Endothelial cell of umbilical vein (primary cell): ENCODE measurements at regions of chr3 and their contacts with region 1.

Region 1: GRCh38 chr3:88113311-88114162 is 36.2 kb upstream of the C3orf38 start:
- DNase-seq: peak; percentile 84
- H3K4me3 ChIP-seq: no peak overlapping the region
- H3K27ac ChIP-seq: peak overlapping the region; percentile 3
- H3K4me1 ChIP-seq: no peaks in the 10 kb centered on the region
- H3K27me3 ChIP-seq: no peaks in the 10 kb centered on the region
- CTCF ChIP-seq: peak; percentile 59 to 62
- POLR2A ChIP-seq: no peak

Region 2: DNA sequence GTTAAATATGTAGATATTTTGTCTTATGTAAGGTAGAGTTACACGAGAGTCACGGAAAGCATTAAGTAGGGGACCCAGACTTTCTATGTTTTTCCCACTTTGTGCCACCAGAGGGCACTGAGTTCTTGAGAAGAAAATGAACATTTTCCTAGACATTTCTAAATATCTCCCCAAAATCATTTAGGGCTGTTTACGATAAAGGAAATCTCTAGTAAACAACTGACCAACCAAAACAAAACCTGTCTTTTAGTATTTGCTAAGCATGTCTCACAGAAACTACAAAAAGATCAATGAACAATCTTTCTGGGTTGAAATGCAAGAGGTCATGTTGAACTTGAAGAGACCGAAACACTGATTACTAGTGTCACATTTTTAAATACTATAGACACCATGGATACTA is 853.3 kb before region 1 on chr3:
- CTCF ChIA-PET with region 1: interaction called, 12 read pairs
- POLR2A ChIA-PET with region 1: no interaction called
- dilution Hi-C with region 1: no loop called
- intact Hi-C with region 1: no loop called
- DNase-seq: peak; percentile 66
- H3K4me3 ChIP-seq: no peak overlapping the region
- H3K27ac ChIP-seq: no peak overlapping the region
- H3K4me1 ChIP-seq: no peaks in the 10 kb centered on the region
- H3K27me3 ChIP-seq: no peaks in the 10 kb centered on the region
- CTCF ChIP-seq: peak; percentile 53 to 59
- POLR2A ChIP-seq: no peak

Region 3: DNA sequence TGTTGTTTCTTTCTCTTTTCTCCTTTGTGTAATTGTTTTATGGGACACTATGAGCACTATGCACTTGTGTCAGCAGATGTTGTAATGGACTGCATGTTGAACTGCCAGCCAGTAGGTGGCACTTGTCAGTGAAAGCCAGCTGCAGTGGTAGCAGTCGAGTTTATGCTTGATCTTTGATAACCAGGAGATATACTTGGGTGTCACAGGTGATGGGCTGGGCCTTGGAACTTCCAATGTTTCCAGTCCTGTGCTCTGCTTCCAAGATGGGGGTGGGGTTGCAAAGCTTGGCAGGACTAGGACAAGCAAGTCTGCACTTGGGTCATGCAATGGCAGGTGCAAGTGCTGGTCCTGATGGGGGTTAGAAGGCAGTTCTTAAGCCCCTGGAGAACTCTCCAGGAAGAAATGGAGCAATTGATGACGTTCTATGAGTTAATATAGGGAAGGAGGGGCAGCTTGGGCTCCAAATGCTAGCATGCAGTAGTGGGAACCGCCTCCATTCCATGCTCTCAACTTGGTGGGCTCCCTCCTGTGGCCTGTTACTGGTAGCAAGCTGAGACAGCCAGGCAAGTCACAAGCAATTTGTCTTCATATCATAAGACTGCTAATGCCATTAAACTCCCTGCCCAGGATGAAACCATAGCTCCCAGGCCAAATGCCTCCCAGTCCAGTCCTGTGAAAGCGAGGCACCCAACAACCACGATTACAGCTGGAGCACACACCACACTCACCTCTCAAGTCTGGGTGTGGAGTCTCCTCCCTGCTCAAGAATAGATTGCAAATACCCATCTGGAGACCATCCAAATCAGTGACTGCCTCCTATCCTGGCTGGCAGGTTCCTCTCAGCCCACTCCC is 342.0 kb before region 1 on chr3:
- CTCF ChIA-PET with region 1: interaction called, 11 read pairs
- POLR2A ChIA-PET with region 1: no interaction called
- dilution Hi-C with region 1: no loop called
- intact Hi-C with region 1: loop called (anchors 2 kb)
- DNase-seq: peak; percentile 52
- H3K4me3 ChIP-seq: no peak overlapping the region
- H3K27ac ChIP-seq: no peak overlapping the region
- H3K4me1 ChIP-seq: no peaks in the 10 kb centered on the region
- H3K27me3 ChIP-seq: peaks cover 0 to 3% of the 10 kb centered on the region in 2 experiments
- CTCF ChIP-seq: peak; percentile 76 to 79
- POLR2A ChIP-seq: no peak

Region 4: DNA sequence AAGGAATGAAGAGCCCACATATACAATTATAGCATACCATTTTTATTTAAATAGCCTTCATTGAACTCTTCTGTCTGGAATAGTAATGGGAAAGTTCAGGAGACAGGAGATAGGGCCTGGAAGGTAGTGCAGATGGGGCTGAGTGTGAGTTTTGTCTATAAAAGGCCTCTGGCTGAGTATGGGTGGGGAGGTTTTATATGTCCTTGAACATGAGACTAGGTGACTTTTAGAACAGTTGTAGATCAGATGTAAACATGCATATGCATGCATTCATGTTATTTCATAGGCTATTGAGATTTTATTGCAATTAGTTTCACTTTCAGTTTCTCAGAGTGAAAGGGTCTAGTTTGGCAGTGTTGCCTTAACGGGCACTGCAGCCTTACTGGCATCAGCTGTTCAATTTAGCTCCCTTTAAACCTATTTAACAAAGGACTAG is 81.9 kb before region 1 on chr3:
- CTCF ChIA-PET with region 1: interaction called, 15 read pairs
- POLR2A ChIA-PET with region 1: no interaction called
- dilution Hi-C with region 1: no loop called
- intact Hi-C with region 1: no loop called
- DNase-seq: peak; percentile 77
- H3K4me3 ChIP-seq: peak overlapping the region; percentile 24 to 92 (median 84)
- H3K27ac ChIP-seq: peak overlapping the region; percentile 53
- H3K4me1 ChIP-seq: peaks cover 17% of the 10 kb centered on the region
- H3K27me3 ChIP-seq: no peaks in the 10 kb centered on the region
- CTCF ChIP-seq: no peak
- POLR2A ChIP-seq: no peak

Region 5: GRCh38 chr3:88093266-88093665 is 20.3 kb before region 1 on chr3:
- CTCF ChIA-PET with region 1: interaction called, 33 read pairs
- POLR2A ChIA-PET with region 1: no interaction called
- dilution Hi-C with region 1: no loop called
- intact Hi-C with region 1: no loop called
- DNase-seq: no peak
- H3K4me3 ChIP-seq: no peak overlapping the region
- H3K27ac ChIP-seq: no peak overlapping the region
- H3K4me1 ChIP-seq: no peaks in the 10 kb centered on the region
- H3K27me3 ChIP-seq: no peaks in the 10 kb centered on the region
- CTCF ChIP-seq: no peak
- POLR2A ChIP-seq: no peak

Region 6: GRCh38 chr3:88137836-88138235 is 24.3 kb after region 1 on chr3:
- CTCF ChIA-PET with region 1: interaction called, 11 read pairs
- POLR2A ChIA-PET with region 1: no interaction called
- dilution Hi-C with region 1: no loop called
- intact Hi-C with region 1: no loop called
- DNase-seq: no peak
- H3K4me3 ChIP-seq: no peak overlapping the region
- H3K27ac ChIP-seq: no peak overlapping the region
- H3K4me1 ChIP-seq: no peaks in the 10 kb centered on the region
- H3K27me3 ChIP-seq: no peaks in the 10 kb centered on the region
- CTCF ChIP-seq: no peak
- POLR2A ChIP-seq: no peak

Region 7: GRCh38 chr3:88203642-88204055 is 90.1 kb after region 1 on chr3:
- CTCF ChIA-PET with region 1: no interaction called
- POLR2A ChIA-PET with region 1: no interaction called
- dilution Hi-C with region 1: no loop called
- intact Hi-C with region 1: no loop called
- DNase-seq: peak; percentile 72
- H3K4me3 ChIP-seq: no peak overlapping the region
- H3K27ac ChIP-seq: no peak overlapping the region
- H3K4me1 ChIP-seq: no peaks in the 10 kb centered on the region
- H3K27me3 ChIP-seq: no peaks in the 10 kb centered on the region
- CTCF ChIP-seq: peak; percentile 72 to 75
- POLR2A ChIP-seq: no peak

Region 8: DNA sequence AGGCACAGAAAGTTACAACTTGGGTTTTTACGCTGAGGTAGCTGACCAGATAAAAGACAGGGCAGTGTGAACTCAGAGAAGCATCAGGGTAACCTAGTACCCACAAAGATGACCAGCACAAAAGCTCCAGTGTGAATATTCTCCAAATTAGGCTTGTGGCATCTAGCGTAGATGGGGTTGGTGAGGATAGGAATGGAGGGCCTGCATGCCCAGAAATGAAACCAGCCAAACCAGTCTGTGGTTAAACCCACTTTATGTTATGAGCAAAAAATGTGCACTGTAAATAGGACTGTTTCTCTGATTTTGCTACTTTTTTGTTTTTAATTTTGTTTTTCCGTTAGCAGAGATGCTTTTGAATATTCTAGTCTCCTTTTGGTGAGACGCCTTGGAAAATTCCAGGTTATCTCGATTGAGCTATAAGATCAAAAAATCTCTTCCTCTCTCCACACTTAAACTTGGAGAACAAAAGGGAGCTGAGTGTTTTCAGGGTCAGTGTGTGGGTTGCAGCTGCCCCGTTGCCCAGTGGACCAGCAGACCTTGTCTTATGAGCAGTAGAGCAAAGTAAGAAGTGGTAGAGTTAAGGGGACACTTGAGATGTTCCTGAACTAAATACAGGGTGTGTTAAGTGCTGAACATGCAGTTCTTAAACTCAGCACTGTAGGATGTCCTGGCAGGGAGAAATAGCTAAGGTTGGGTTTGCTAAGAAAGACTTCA is 169.1 kb after region 1 on chr3:
- CTCF ChIA-PET with region 1: no interaction called
- POLR2A ChIA-PET with region 1: no interaction called
- dilution Hi-C with region 1: no loop called
- intact Hi-C with region 1: no loop called
- DNase-seq: no peak
- H3K4me3 ChIP-seq: no peak overlapping the region
- H3K27ac ChIP-seq: no peak overlapping the region
- H3K4me1 ChIP-seq: no peaks in the 10 kb centered on the region
- H3K27me3 ChIP-seq: no peaks in the 10 kb centered on the region
- CTCF ChIP-seq: no peak
- POLR2A ChIP-seq: no peak